Activated CD8-positive, alpha-beta T cell treated with anti-CD3 and anti-CD28 coated beads, Interleukin-2, amount 10 ng/mL, durations not matched to agents 7 days and 5 days (primary cell): ENCODE measurements at regions of chr7 and their contacts with region 1.

Region 1: DNA sequence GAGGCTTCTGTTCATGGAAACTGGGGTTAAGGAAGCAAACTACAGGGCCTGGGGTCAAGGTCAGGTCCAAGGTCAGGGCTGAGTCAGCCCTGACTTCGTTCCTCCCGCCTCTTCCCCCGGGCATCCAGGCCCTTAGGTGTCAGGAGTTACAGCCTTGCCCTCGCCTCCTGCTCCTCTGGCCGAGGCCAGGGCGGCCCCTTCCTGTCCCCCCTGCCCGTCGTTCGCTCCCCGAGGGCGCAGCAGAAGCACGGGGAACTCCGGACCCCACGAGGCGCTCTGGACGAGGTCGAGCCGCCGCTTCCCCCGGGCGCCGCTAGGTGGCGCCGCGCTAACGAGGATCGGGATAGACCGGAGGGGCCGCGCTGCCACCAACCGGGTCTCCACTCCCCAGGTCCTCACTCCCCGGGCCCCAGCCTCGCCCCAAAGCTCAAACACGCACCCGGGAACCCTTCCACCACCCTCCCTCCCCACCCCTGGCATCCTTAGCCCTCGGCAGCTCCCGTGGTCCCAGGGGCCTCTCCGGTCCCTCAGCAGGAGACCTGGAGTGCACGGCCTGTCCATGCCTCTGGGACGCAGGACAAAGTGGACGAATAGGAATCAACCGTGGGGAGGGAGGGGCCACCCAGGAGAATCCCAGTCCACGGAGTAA is 59.2 kb upstream of the MYL10 start:
- DNase-seq: peak; percentile 85
- ATAC-seq: peak; percentile 95
- H3K4me3 Mint-ChIP-seq: no peak overlapping the region
- H3K27ac Mint-ChIP-seq: no peak overlapping the region
- H3K4me1 Mint-ChIP-seq: peaks cover 4% of the 10 kb centered on the region
- H3K27me3 Mint-ChIP-seq: no peaks in the 10 kb centered on the region

Region 2: GRCh38 chr7:101804967-101805366 is 116.7 kb after region 1 on chr7:
- CTCF ChIA-PET with region 1: interaction called, 12 read pairs
- POLR2A ChIA-PET with region 1: no interaction called
- DNase-seq: peak; percentile 30
- ATAC-seq: peak; percentile 71
- H3K4me3 Mint-ChIP-seq: no peak overlapping the region
- H3K27ac Mint-ChIP-seq: no peak overlapping the region
- H3K4me1 Mint-ChIP-seq: peaks cover 15% of the 10 kb centered on the region
- H3K27me3 Mint-ChIP-seq: peaks cover 23% of the 10 kb centered on the region

Region 3: GRCh38 chr7:101814991-101815834 is 126.9 kb after region 1 on chr7:
- CTCF ChIA-PET with region 1: interaction called, 12 read pairs
- POLR2A ChIA-PET with region 1: interaction called, 4 read pairs
- DNase-seq: peak; percentile 66
- ATAC-seq: peak; percentile 35
- H3K4me3 Mint-ChIP-seq: peak overlapping the region; percentile 63
- H3K27ac Mint-ChIP-seq: peak overlapping the region; percentile 23
- H3K4me1 Mint-ChIP-seq: peaks cover 20% of the 10 kb centered on the region
- H3K27me3 Mint-ChIP-seq: peaks cover 12% of the 10 kb centered on the region

Region 4: DNA sequence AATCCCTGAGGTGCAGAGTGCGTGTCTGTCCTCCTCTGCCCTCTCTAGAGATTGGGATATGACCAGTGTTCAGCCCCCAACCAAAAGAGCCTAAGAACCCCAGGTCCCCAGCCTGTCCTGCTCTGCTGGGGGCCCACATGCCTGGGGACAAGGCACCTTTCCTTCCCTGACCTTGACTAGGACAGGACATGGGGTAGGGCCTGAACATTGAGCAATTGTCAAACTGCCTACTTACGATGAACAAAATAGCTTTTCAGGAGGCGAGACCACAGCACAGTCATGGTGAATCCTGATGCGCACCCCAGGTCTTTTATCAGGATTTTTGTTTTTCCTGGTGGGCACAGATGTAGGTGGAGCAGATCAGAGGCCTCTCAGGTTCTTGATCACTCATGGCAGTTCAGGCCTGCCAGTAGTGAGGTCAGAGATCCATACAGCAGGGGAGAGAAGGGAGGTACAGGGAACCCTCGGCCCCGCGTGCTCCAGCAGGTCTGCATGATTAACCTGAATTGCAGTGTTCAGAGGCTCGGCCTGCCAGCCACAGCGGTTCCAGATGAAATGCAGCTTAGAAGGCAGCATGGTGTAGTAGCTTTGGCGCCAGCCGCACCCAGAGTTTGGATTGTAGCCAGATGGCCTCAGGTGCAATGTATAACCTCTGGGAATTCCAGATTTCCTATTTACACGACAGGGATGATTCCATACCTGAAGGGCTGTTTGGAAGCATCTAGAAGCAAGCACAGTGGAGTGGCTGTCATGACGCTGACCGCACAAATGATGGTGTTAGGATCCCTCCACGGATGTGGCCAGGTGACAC is 320.4 kb after region 1 on chr7:
- CTCF ChIA-PET with region 1: no interaction called
- POLR2A ChIA-PET with region 1: no interaction called
- DNase-seq: no peak
- ATAC-seq: no peak
- H3K4me3 Mint-ChIP-seq: no peak overlapping the region
- H3K27ac Mint-ChIP-seq: no peak overlapping the region
- H3K4me1 Mint-ChIP-seq: no peaks in the 10 kb centered on the region
- H3K27me3 Mint-ChIP-seq: no peaks in the 10 kb centered on the region